Motor neuron (in vitro differentiated cells): ENCODE measurements at regions of chr6 and their contacts with region 1.

Region 1: DNA sequence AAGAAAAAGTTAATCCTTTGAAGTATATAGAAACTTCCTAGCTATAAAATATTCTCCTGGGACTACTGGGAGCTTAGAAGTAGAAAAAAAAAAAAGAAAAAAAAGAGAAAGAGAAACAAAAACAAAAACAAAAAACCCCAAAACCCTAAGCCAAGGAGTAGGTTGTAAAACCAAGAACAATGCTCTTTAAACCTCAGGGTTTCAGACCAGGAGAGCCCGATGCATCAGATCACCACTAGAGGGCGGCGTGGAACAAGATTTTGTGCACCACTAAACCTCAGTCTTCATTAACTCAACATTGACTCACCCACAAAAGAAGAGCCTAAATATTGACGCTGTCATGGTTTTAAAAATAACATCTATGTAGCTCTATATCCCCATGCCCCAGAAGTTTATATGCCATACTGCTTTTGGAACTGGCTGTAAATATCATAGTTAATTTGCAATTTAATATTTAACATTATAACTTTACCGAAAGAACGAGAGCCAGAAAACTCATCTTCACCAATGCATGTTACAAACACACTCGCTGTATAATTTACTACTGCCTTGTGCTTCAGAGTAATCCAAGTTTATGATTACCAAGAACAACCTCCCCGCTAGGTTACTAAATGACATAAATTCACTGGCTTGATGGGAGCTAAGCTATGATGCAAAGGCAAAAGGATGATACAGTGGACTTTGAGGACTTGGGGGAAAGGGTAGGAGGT is 19.2 kb downstream of the MCUR1 start:
- ATAC-seq: peak; percentile 60 to 91 (median 78)
- H3K4me3 ChIP-seq: no peak overlapping the region
- H3K27ac ChIP-seq: no peak overlapping the region
- H3K4me1 ChIP-seq: no peaks in the 10 kb centered on the region

Region 2: DNA sequence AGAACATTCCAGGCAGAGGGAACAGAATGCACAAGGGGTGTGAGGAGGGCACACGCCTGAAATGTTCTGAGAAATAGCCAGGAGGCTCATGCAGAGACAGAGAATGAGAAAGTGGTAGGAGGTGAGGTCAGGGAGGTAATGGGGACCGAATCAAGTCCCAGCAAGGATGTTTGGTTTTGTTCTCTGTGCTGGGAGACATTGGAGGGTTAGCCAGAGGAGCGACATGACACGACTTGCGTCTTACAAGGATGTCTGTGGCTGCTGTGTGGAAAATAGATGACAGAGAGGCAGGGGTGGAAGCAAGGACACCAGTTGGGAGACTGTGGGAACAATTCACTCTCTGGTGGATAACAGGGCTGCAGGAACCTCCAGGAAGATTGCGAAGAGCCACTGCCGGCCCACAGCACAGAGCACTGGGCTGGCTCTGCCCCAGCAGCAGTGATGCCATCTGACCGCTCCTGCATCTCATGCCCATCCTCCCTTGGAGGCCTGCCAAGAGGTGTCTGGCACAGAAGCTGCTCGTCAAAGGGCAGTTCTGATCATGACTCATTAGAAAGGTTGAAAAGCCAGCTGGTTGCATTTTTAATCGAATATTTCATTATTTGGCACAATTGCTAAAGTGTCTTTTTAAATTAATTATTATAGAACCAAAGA is 264.7 kb after region 1 on chr6:
- in situ Hi-C with region 1: loop called in 4 of 9 experiments (anchors 10 to 25 kb)
- ATAC-seq: no peak
- H3K4me3 ChIP-seq: no peak overlapping the region
- H3K27ac ChIP-seq: no peak overlapping the region
- H3K4me1 ChIP-seq: peaks cover 0 to 2% of the 10 kb centered on the region in 2 donors

Region 3: GRCh38 chr6:14066782-14067406 is 271.7 kb after region 1 on chr6:
- in situ Hi-C with region 1: loop called in 3 of 9 experiments (anchors 10 to 25 kb)
- ATAC-seq: peak; percentile 39 to 89 (median 60)
- H3K4me3 ChIP-seq: no peak overlapping the region
- H3K27ac ChIP-seq: no peak overlapping the region
- H3K4me1 ChIP-seq: no peaks in the 10 kb centered on the region

Region 4: DNA sequence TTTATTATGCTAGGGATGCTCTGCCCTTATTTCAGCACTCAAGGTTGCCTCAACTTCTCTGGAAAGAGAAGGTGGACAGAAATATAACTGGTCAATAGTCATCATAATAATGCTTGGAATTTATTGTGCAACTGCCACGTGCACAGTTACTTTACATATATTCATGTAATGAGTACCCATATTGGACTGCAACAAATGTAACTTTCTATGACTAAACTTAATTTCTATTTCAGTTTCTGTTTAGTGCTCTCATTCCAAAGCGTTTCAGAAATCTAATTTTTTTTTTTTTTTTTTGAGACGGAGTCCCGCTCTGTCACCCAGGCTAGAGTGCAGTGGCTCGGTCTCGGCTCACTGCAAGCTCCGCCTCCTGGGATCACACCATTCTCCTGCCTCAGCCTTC is 294.0 kb after region 1 on chr6:
- in situ Hi-C with region 1: no loop called
- ATAC-seq: peak in 3 of 8 experiments; percentile 55 to 81 (median 55)
- H3K4me3 ChIP-seq: no peak overlapping the region
- H3K27ac ChIP-seq: no peak overlapping the region
- H3K4me1 ChIP-seq: peaks cover 0 to 3% of the 10 kb centered on the region in 2 donors